GM10248 (cell line): ENCODE measurements at regions of chr22 and their contacts with region 1.

Region 1: DNA sequence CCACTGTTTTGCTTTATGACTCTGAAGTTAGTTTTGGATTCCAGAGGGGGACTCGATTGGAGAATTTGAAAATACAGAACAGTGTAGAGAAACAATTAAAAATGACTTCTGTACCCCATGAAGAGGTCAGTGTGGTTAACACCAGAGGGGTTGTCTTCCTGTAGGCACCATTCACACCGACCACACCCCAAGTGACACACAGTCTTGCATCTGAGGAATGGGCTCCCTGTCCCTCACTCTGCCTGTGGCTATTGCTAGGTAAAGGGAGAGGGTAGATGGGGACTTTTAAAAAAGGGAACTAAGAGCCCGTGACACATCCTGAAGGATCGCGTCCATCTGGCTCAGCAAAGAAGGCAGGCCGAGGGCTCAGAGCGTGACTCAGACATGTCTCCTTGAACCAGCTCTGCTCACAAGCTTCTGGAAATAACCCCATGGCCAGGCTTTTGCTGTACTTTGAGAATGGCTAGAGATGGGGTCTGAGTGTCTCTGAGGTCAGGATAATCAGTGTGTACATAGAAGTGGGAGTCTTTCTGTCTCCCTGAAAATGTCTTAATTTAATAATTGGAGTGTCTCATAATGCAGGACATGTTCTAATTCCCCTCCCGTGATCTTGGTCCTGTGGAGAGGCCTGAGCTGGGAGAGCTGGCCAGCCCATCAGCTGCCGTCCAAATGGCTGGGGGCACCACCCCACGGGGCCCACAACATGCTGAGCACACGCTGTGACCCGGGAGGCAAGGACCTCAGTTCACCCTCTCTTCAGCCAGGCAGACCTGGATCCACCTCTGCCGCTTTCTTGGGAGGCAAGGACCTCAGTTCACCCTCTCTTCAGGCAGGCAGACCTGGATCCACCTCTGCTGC is 39.3 kb downstream of the SGSM1 start:
- DNase-seq: no peak
- CTCF ChIP-seq: no peak

Region 2: DNA sequence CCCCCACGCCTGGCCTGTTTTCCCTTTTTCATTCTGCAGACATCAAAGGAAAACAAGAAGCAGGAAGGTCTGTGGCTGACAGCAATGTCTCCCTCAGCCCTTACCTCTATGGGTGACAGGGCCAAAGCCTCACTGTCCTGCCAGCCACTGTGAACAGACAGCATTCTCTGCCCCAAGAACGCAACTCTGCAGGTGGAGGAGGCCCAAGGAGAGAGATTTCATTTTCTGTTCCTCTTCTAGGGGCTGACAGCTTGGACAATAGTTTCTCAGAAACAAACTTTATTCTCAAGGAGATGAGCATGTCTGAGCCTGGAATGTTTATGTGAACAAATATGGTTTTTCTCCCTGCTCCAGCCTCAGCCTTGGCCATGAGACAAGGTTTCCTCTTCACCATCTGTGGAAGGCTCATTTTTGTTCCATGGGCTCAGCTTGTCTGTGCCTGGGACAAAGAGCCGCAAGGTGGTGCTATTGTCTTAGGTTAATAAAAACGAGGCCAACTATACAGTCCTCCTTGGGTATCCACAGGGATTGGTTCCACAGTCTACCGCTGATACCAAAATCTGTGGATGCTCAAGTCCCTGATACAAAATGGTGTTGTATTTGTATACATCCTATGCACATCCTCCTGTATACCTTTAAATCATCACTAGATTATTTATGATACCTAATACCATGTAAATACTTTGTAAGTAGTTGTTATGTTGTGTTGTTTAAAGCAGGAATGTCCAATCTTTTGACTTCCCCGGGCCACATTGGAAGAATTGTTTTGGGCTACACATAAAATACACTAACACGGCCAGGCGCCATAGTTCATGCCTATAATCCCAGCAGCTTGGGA is 76.5 kb before region 1 on chr22:
- CTCF ChIA-PET with region 1: interaction called, 19 read pairs
- POLR2A ChIA-PET with region 1: no interaction called
- DNase-seq: peak; percentile 60
- CTCF ChIP-seq: peak; percentile 38

Region 3: DNA sequence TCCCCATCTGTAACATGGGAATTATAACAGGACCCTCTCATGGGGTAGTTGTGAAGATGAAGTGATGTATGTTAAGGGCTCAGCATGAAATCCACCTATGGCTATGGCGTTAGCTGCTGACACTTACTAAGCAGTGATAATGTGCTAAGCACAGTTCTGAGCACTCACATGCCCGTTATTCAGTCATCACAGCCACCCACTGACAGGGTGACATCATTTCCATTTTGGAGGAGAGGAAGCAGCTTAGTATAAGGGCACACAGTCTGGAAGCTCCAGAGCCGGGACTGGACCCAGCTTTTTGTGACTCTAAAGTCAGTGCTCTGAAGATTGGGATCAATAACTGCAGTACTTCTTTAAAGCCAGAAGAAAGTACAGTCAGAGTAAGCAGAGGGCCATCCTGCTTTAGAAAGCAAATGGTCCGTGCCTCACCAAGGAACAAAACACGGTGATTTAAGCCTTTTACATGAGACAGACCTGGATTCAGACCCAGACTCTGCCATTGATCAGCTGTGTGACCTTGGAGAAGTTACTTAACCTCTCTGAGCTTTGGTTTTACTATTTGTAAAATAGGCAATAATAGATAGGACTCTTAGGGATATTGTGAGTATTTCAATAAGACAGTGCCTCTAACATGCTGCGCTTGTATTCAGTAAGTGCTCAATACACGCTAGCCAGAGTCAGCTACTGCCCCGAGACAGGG is 22.2 kb after region 1 on chr22:
- CTCF ChIA-PET with region 1: interaction called, 13 read pairs
- POLR2A ChIA-PET with region 1: no interaction called
- DNase-seq: no peak
- CTCF ChIP-seq: no peak

Region 4: GRCh38 chr22:24875862-24876506 is 30.7 kb after region 1 on chr22:
- CTCF ChIA-PET with region 1: interaction called, 14 read pairs
- POLR2A ChIA-PET with region 1: no interaction called
- DNase-seq: no peak
- CTCF ChIP-seq: no peak

Region 5: GRCh38 chr22:24887260-24887659 is 42.0 kb after region 1 on chr22:
- CTCF ChIA-PET with region 1: no interaction called
- POLR2A ChIA-PET with region 1: no interaction called
- DNase-seq: no peak
- CTCF ChIP-seq: no peak